OCI-LY7 (cell line): ENCODE measurements at regions of chr22 and their contacts with region 1.

Region 1: GRCh38 chr22:49350441-49351121 is 477.1 kb downstream of the BRD1 start:
- DNase-seq: peak; percentile 83
- H3K4me3 ChIP-seq: peak overlapping the region; percentile 54
- H3K27ac ChIP-seq: peak overlapping the region; percentile 98
- H3K4me1 ChIP-seq: peaks cover 70% of the 10 kb centered on the region
- CTCF ChIP-seq: peak; percentile 75

Region 2: DNA sequence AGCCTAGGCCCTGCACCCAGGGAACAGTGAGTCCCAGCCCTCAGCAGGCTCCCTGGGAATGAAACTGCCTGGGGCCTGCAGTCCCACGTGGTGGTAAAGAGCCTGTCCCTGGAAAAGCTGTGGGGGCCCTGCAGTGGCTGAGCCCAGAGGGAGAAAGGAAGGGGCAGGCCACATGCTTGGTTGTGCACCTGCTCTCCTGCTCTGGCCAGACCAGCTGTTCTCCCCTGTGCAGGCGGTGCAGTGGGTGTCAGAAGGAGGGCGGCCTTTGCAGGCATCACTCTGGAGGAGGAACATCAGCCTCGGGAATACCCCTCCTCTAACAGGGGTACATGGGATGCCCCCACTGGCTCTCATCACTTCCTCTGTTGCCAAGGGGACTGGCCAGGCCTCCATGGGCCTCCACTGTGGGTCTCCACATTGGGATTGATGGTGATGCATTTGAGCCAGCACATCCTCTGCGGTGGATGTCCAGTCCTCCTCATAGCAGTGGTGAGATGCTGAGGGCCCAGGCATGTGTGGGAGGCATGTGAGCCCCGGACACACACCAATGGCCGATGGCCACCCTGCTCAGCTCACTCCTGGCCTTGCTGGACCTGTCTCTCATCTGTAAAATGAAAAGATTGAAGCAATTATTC is 213.3 kb before region 1 on chr22:
- CTCF ChIA-PET with region 1: no interaction called
- POLR2A ChIA-PET with region 1: no interaction called
- intact Hi-C with region 1: no loop called
- DNase-seq: no peak
- H3K4me3 ChIP-seq: no peak overlapping the region
- H3K27ac ChIP-seq: no peak overlapping the region
- H3K4me1 ChIP-seq: no peaks in the 10 kb centered on the region
- CTCF ChIP-seq: no peak

Region 3: GRCh38 chr22:49305214-49305909 is 45.2 kb before region 1 on chr22:
- CTCF ChIA-PET with region 1: no interaction called
- POLR2A ChIA-PET with region 1: no interaction called
- intact Hi-C with region 1: loop called (anchors 2 kb)
- DNase-seq: peak; percentile 67
- H3K4me3 ChIP-seq: no peak overlapping the region
- H3K27ac ChIP-seq: no peak overlapping the region
- H3K4me1 ChIP-seq: peaks cover 31% of the 10 kb centered on the region
- CTCF ChIP-seq: peak; percentile 95

Region 4: GRCh38 chr22:49381595-49382450 is 31.2 kb after region 1 on chr22:
- CTCF ChIA-PET with region 1: no interaction called
- POLR2A ChIA-PET with region 1: interaction called, 3 read pairs
- intact Hi-C with region 1: loop called (anchors 2 kb)
- DNase-seq: no peak
- H3K4me3 ChIP-seq: peak overlapping the region; percentile 18
- H3K27ac ChIP-seq: peak overlapping the region; percentile 100
- H3K4me1 ChIP-seq: peaks cover 54% of the 10 kb centered on the region
- CTCF ChIP-seq: no peak

Region 5: GRCh38 chr22:49667236-49667635 is 316.7 kb after region 1 on chr22:
- CTCF ChIA-PET with region 1: no interaction called
- POLR2A ChIA-PET with region 1: no interaction called
- intact Hi-C with region 1: loop called (anchors 10 kb)
- DNase-seq: peak; percentile 37
- H3K4me3 ChIP-seq: peak overlapping the region; percentile 5
- H3K27ac ChIP-seq: no peak overlapping the region
- H3K4me1 ChIP-seq: peaks cover 12% of the 10 kb centered on the region
- CTCF ChIP-seq: no peak

Region 6: DNA sequence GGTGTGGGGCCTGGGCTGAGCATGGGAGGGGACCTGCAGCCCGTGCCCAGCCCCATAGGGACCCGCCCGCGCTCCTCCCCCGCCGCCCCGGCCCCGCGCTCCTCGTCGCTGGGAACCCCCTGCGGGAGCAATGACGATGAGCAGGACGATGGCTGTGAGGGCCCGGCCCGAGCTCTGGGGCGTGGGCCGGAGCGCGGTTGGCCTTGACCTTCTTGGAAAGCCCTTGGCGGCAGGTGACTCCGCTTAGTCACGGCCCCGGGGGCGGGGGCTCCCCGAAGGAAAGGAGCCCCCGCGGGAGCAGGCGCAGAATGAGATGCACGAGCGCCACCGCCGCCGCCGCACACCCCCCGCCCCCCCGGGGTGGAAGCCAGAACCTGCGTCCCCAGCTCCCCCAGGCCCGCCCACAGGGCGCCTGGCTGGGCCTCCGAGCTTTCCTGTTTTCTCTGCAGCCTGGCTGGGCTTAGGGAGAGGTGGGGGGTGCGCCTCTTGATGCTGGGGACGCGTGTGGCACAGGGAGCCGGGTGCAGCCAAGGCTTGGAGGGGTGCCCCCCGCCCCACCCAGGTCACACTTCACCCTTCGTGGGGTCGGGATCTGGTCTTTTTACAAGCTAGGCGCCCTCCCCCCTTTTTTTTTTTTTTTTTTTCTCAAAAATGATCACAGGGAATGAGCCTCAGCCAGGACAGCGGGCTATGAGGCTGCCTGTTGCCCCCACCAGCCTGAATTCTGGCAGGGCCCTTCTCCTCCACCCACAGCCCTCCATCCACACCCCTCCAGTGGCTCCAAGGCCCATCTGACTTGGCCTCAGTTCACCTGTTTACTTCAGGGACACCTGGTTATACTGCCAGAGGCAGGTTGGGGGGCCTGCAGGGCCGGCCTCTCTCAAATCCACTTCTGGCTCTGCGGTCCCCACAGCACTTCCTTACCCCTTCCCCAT is 585.7 kb after region 1 on chr22:
- CTCF ChIA-PET with region 1: no interaction called
- POLR2A ChIA-PET with region 1: no interaction called
- intact Hi-C with region 1: loop called (anchors 10 kb)
- DNase-seq: peak; percentile 83
- H3K4me3 ChIP-seq: peak overlapping the region; percentile 66
- H3K27ac ChIP-seq: peak overlapping the region; percentile 81
- H3K4me1 ChIP-seq: peaks cover 52% of the 10 kb centered on the region
- CTCF ChIP-seq: no peak